OCI-LY7 (cell line): ENCODE measurements at regions of chr17 and their contacts with region 1.

Region 1: GRCh38 chr17:34980681-34981537 is 597 bp downstream of the LIG3 start:
- DNase-seq: peak; percentile 84
- H3K4me3 ChIP-seq: peak overlapping the region; percentile 92
- H3K27ac ChIP-seq: peak overlapping the region; percentile 82
- H3K4me1 ChIP-seq: peaks cover 16% of the 10 kb centered on the region
- CTCF ChIP-seq: peak; percentile 63

Region 2: GRCh38 chr17:34499576-34499975 is 481.3 kb before region 1 on chr17:
- CTCF ChIA-PET with region 1: no interaction called
- POLR2A ChIA-PET with region 1: no interaction called
- intact Hi-C with region 1: no loop called
- DNase-seq: peak; percentile 27
- H3K4me3 ChIP-seq: no peak overlapping the region
- H3K27ac ChIP-seq: no peak overlapping the region
- H3K4me1 ChIP-seq: no peaks in the 10 kb centered on the region
- CTCF ChIP-seq: no peak

Region 3: DNA sequence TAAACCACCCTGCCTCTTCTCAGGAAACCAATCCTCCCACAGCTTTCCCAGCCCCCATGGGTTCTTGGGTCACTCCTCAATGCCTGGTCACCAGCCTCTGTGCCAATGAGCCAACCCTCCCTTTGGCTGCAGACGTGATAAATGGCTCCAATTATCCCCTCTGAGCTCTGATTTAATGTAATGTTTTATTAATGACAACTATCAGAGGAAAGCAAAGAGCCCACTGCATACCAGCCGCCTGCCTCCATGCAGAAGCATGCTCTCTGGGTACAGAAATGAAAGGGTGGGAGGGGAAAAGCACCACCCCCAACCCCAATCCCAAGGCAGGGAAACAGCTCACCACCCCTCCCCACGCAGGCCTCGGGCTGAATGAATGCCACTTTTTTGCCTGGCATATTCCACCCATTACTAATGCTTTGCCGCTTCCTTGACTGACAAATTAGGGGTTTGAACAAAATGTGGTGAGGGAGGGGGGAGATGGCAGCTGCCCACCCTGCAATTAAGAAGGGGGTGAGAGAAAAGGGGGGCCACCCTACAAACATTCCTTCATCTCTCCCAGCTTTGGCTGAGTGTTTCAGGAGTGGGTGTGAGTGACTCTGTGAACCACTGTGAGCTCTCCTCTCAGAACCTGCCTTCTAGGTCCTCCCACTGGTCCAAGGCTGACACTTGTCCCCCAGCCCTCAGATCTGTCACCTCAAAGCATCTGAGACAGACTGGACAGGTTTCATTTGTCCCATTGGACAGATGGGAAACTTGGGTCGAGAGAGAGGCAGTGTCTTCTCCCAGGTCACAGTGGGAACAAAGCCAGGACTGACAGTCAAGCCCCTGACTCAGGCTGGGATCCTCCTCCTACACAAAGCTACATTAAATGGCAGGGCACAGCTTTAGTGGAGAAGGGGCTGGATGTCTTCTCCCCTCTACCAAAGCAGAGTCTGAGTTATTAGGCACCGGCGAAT is 240.1 kb before region 1 on chr17:
- CTCF ChIA-PET with region 1: no interaction called
- POLR2A ChIA-PET with region 1: no interaction called
- intact Hi-C with region 1: no loop called
- DNase-seq: no peak
- H3K4me3 ChIP-seq: no peak overlapping the region
- H3K27ac ChIP-seq: no peak overlapping the region
- H3K4me1 ChIP-seq: no peaks in the 10 kb centered on the region
- CTCF ChIP-seq: no peak

Region 4: GRCh38 chr17:34840750-34841149 is 140.2 kb before region 1 on chr17:
- CTCF ChIA-PET with region 1: no interaction called
- POLR2A ChIA-PET with region 1: no interaction called
- intact Hi-C with region 1: loop called (anchors 5 kb)
- DNase-seq: peak; percentile 89
- H3K4me3 ChIP-seq: peak overlapping the region; percentile 39
- H3K27ac ChIP-seq: peak overlapping the region; percentile 84
- H3K4me1 ChIP-seq: peaks cover 66% of the 10 kb centered on the region
- CTCF ChIP-seq: no peak

Region 5: GRCh38 chr17:34961093-34961911 is 19.6 kb before region 1 on chr17 and contains the starts of genes CCT6B and ZNF830:
- CTCF ChIA-PET with region 1: interaction called, 3 read pairs
- POLR2A ChIA-PET with region 1: interaction called, 7 read pairs
- intact Hi-C with region 1: loop called (anchors 1 kb)
- DNase-seq: peak; percentile 94
- H3K4me3 ChIP-seq: peak within 1 kb of the TSS; percentile 80
- H3K27ac ChIP-seq: peak within 1 kb of the TSS; percentile 60
- H3K4me1 ChIP-seq: peaks cover 20% of the 10 kb centered on the region
- CTCF ChIP-seq: no peak
- total RNA-seq, gene CCT6B: 0.10 and 1.9 TPM in 2 replicates
- total RNA-seq, gene ZNF830: 25.0 and 41.9 TPM in 2 replicates

Region 6: DNA sequence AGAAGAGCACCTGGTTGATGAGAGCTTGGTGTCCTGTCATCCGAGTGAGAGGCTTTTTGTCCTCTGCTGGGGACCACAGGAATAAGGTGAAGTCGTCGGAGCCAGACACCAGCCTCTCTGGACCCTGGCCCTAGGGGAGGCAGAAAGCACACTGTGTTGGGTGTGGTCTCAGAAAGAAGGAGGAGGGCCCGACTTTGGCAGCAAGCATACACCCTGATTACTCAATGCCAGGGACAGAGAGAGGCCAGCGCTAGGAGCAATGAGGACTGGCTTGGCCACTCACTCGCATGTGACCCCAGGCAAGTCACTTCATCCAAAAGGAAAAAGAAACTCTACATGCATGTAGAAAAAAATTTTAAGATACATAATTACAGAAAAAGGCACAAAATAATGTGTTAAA is 154.4 kb after region 1 on chr17:
- CTCF ChIA-PET with region 1: no interaction called
- POLR2A ChIA-PET with region 1: no interaction called
- intact Hi-C with region 1: no loop called
- DNase-seq: no peak
- H3K4me3 ChIP-seq: no peak overlapping the region
- H3K27ac ChIP-seq: no peak overlapping the region
- H3K4me1 ChIP-seq: peaks cover 8% of the 10 kb centered on the region
- CTCF ChIP-seq: no peak

Region 7: GRCh38 chr17:35514564-35514963 is 533.7 kb after region 1 on chr17:
- CTCF ChIA-PET with region 1: no interaction called
- POLR2A ChIA-PET with region 1: no interaction called
- intact Hi-C with region 1: no loop called
- DNase-seq: no peak
- H3K4me3 ChIP-seq: no peak overlapping the region
- H3K27ac ChIP-seq: no peak overlapping the region
- H3K4me1 ChIP-seq: no peaks in the 10 kb centered on the region
- CTCF ChIP-seq: no peak